ENCODE measurements at regions of chr1 and their contacts with region 1.

Region 1: DNA sequence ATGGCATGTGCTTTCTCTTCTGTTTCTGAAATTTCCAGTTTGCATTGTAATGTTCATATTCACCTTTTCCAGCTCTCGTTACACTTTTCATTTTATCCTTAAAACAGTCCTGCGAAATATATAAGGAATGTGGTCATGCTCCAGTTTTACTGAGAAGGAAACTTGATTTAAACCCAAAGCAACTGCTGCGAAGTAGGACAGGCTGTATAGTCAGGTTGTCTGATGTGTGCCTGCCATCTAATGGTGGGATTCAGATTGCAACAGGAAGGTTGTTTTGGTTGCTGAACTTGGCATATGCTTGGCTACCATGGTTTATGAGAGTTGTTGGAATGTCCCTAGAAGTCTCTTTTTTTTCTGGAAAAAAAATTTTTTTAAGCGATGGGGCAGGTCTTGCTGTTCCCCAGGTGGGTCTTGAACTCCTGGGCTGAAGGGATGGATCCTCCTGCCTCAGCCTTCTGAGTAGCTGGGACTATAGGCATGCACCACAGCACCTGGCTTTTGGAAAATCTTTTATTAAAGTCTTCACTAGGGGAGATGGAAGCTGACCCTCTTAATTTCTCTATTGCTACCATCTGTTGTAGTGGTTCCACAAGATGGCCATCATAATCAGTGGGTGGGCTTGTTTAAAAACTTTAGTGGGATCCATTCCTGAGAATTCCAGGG is 86.9 kb downstream of the UCK2 start:
- DNase-seq: peak in 4 of 5 donors; percentile 70 to 88 (median 84)
- H3K4me3 ChIP-seq: no peak overlapping the region
- H3K27ac ChIP-seq: no peak overlapping the region
- H3K4me1 ChIP-seq: peaks cover 0 to 20% (median 6%) of the 10 kb centered on the region in 3 donors
- H3K27me3 ChIP-seq: no peaks in the 10 kb centered on the region
- CTCF ChIP-seq: peak; percentile 91

Region 2: DNA sequence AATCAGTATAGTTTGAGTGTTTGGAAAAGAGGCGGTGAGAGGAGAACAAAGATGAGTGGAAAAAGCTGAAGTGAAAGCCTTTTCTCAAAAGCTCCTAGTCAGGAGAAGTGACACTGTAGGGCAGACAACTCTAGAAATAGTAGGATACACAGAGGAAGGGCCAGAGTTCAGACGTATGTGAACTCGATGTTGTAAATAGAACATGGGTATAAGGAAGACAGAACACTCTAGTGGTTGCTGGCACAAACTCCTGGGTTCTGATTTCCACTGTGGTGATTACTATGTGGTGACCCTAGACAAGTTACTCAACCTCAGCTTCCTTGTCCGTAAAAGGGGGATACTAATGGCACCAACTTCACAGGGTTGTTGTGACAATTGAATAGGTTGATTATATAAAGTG is 313.5 kb before region 1 on chr1:
- intact Hi-C with region 1: loop called (anchors 5 kb)
- DNase-seq: no peak
- H3K4me3 ChIP-seq: no peak overlapping the region
- H3K27ac ChIP-seq: no peak overlapping the region
- H3K4me1 ChIP-seq: peaks cover 3 to 7% (median 5%) of the 10 kb centered on the region in 3 donors
- H3K27me3 ChIP-seq: no peaks in the 10 kb centered on the region
- CTCF ChIP-seq: no peak

Region 3: DNA sequence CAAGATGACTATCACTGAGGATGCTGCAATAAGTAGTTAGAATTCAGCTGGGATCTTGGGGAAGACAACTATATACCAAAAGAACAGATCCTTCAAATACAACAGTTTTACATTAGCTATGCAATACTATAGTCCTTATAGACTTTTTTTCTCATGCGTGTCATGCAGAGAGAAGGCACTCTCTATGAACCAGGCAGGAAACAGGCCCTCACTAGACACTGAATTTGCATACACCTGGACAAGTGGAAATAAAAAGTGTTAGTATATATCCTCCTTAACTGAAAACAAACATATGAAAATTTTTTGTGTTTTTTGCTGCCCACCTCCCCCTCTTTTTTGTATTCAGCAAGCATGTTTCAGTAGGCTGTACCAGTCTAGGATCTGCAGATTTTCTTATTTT is 175.5 kb before region 1 on chr1:
- intact Hi-C with region 1: loop called (anchors 10 kb)
- DNase-seq: no peak
- H3K4me3 ChIP-seq: no peak overlapping the region
- H3K27ac ChIP-seq: no peak overlapping the region
- H3K4me1 ChIP-seq: no peaks in the 10 kb centered on the region
- H3K27me3 ChIP-seq: no peaks in the 10 kb centered on the region
- CTCF ChIP-seq: no peak

Region 4: DNA sequence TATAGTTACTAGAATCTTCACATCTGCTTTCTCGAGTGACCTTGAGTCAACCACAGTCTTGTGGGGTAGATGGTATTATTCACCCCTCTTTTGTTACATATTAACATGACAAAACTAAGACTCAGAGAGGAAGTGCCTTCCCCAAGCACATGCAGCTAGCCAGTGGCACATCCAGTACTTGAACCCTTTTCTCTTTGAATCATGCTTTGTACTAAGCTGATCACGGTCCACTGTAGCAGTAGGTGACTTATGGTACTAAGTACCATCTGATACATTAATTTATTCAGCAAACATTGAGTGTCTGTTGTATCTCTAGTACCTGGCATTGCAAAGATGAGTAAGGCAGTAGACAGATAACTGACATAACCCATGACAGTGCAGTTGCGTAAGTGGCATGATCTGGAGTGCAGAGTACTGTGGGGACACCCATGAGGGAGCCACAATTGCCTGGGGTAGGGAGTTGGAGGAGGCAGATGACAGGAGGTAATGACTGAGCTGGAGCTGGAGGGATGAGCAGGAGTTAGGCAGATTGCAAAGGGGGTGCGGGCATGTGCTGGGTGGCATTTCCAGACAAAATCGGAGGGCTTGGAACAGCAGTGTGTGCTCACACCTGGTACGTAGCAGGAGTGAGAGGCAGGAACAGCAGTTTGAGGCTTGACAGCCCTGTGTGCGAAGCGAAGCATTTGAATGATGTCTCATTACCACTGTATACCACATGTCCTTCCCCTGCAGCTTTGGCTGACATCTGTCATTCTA is 57.0 kb before region 1 on chr1:
- intact Hi-C with region 1: no loop called
- DNase-seq: no peak
- H3K4me3 ChIP-seq: no peak overlapping the region
- H3K27ac ChIP-seq: no peak overlapping the region
- H3K4me1 ChIP-seq: peaks cover 0 to 19% (median 13%) of the 10 kb centered on the region in 3 donors
- H3K27me3 ChIP-seq: no peaks in the 10 kb centered on the region
- CTCF ChIP-seq: no peak

Region 5: DNA sequence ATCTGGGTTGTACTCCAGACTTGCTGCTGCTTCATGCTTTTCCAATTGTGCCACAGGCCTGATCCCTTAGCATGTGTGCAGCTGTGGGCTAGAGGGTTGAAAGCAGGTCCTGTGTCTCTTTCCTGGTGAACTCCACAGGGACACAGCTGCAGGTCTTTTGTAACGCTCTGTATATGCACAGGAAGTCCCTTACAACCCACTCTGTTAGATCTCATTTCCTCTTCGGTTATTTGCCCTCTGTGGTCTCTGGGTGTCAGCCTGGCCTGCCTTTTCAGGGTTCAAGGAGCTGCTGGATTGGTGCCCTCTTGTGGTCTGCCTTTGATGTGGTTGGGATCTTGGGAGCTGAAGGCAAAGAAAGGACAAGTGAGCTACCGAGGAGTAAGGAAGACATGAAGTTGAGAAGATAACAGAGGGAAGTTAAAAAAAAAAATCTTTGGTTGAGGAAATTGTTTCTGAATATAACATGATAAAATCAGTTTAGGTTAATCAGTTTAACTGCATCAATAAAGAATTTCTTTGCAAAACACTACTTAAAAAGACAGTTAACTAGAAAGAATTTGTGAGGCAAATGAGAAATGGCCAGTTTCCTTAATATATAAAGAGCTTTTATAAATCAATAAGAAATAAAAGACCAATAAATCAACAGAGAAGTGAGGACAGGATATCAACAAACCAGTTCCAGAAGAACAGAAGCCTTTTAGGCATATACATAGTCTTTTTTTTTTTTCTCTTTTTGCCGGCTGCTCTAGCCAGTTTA is 42.8 kb before region 1 on chr1:
- intact Hi-C with region 1: no loop called
- DNase-seq: no peak
- H3K4me3 ChIP-seq: no peak overlapping the region
- H3K27ac ChIP-seq: no peak overlapping the region
- H3K4me1 ChIP-seq: no peaks in the 10 kb centered on the region
- H3K27me3 ChIP-seq: no peaks in the 10 kb centered on the region
- CTCF ChIP-seq: peak; percentile 39

Region 6: DNA sequence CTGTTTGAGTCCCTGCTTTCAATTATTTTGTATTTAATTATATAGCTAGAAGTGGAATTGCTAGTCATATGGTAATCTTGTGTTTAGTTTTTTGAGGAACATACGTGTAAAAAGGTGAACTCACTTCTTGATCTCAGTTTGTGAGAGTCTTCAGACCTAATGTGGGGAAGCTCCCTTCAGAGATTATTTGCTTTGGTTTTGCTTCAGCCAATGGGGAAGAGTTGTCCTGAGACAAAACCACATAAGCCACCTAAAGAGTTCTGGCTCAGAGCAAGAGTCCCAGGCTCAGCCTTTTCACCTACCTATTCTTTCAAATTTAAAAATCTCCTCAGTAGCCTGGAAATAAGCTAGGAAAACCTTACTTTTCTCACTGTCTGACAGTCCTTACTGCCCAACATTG is 51.6 kb after region 1 on chr1:
- intact Hi-C with region 1: no loop called
- DNase-seq: no peak
- H3K4me3 ChIP-seq: no peak overlapping the region
- H3K27ac ChIP-seq: no peak overlapping the region
- H3K4me1 ChIP-seq: no peaks in the 10 kb centered on the region
- H3K27me3 ChIP-seq: no peaks in the 10 kb centered on the region
- CTCF ChIP-seq: no peak

Region 7: GRCh38 chr1:166391279-166392066 is 477.2 kb after region 1 on chr1:
- intact Hi-C with region 1: no loop called
- DNase-seq: no peak
- H3K4me3 ChIP-seq: no peak overlapping the region
- H3K27ac ChIP-seq: no peak overlapping the region
- H3K4me1 ChIP-seq: no peaks in the 10 kb centered on the region
- H3K27me3 ChIP-seq: no peaks in the 10 kb centered on the region
- CTCF ChIP-seq: no peak

Measured in kidney (tissue), 22 donors.